A673 (cell line): ENCODE measurements at regions of chr1 and their contacts with region 1.

Region 1: GRCh38 chr1:192808518-192809306 is at the start of gene RGS2:
- DNase-seq: peak; percentile 94
- H3K4me3 ChIP-seq: peak within 1 kb of the TSS; percentile 64
- H3K27ac ChIP-seq: peak within 1 kb of the TSS; percentile 68
- H3K4me1 ChIP-seq: peaks cover 16% of the 10 kb centered on the region
- H3K27me3 ChIP-seq: no peaks in the 10 kb centered on the region
- CTCF ChIP-seq: peak; percentile 21; the same call in 1 of the 2 replicates
- total RNA-seq, gene RGS2: 24.2 and 24.7 TPM in 2 replicates

Region 2: DNA sequence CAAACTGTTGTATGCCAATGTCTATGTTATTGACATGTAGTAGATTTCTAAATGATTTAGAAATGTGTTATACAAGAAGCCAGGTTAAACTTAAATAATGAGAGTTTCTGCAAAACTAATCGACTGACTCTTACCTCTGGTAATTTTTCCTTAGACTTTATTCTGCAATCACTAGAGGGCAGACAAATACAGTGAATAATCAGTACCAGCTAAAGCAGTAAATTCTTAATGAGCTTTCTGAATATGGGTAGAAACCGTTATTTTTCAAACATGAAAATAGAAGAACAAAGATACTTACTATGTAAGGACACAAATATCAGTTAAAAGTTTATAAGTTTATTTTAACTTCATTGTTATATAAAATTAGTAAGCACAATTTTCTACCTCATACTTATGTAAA is 331.1 kb before region 1 on chr1:
- CTCF ChIA-PET with region 1: interaction called, 5 read pairs
- POLR2A ChIA-PET with region 1: no interaction called
- intact Hi-C with region 1: loop called (anchors 5 kb)
- DNase-seq: peak; percentile 81
- H3K4me3 ChIP-seq: no peak overlapping the region
- H3K27ac ChIP-seq: no peak overlapping the region
- H3K4me1 ChIP-seq: peaks cover 21% of the 10 kb centered on the region
- H3K27me3 ChIP-seq: no peaks in the 10 kb centered on the region
- CTCF ChIP-seq: peak; percentile 80

Region 3: GRCh38 chr1:192700834-192701271 is 107.9 kb before region 1 on chr1:
- CTCF ChIA-PET with region 1: no interaction called
- POLR2A ChIA-PET with region 1: no interaction called
- intact Hi-C with region 1: loop called (anchors 5 kb)
- DNase-seq: peak; percentile 83
- H3K4me3 ChIP-seq: no peak overlapping the region
- H3K27ac ChIP-seq: peak overlapping the region; percentile 9
- H3K4me1 ChIP-seq: peaks cover 23% of the 10 kb centered on the region
- H3K27me3 ChIP-seq: no peaks in the 10 kb centered on the region
- CTCF ChIP-seq: no peak

Region 4: DNA sequence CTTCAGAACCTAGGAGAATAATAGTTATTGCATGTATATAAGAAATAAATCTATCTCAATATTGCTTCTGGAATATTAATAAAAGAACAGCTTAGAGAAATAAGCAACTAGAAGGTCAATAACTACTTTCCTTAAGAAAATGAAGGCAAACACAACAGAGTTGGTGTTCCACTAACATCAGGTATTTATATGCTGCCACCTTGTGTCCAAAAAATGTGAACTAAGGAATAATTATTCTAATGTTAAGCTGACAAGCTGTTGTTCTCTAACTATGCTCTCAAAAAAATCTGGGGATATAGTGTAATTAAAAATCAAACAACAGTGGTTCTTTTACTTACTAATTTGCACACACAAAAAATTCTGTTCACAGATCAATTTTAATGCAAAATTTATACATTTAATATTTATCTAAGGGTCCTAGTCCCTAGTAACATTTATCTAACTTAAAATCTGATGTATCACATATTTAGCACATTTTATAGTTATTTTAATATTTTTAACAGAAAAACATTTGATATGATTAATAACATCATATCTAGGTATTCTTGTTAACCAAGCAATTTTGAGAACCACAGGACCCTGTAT is 210.8 kb after region 1 on chr1:
- CTCF ChIA-PET with region 1: interaction called, 13 read pairs
- POLR2A ChIA-PET with region 1: no interaction called
- intact Hi-C with region 1: loop called (anchors 1 kb)
- DNase-seq: peak; percentile 73
- H3K4me3 ChIP-seq: no peak overlapping the region
- H3K27ac ChIP-seq: no peak overlapping the region
- H3K4me1 ChIP-seq: no peaks in the 10 kb centered on the region
- H3K27me3 ChIP-seq: no peaks in the 10 kb centered on the region
- CTCF ChIP-seq: peak; percentile 66